Right cardiac atrium (tissue), 5 donors: ENCODE measurements at regions of chr12 and their contacts with region 1.

Region 1: GRCh38 chr12:9118158-9118557 is 2.4 kb upstream of the A2M start:
- DNase-seq: peak; percentile 12 to 49 (median 41)
- ATAC-seq: peak; percentile 53 to 54
- H3K4me3 ChIP-seq: no peak overlapping the region
- H3K27ac ChIP-seq: peak overlapping the region; percentile 49
- H3K4me1 ChIP-seq: peaks cover 5% of the 10 kb centered on the region
- H3K27me3 ChIP-seq: no peaks in the 10 kb centered on the region

Region 2: DNA sequence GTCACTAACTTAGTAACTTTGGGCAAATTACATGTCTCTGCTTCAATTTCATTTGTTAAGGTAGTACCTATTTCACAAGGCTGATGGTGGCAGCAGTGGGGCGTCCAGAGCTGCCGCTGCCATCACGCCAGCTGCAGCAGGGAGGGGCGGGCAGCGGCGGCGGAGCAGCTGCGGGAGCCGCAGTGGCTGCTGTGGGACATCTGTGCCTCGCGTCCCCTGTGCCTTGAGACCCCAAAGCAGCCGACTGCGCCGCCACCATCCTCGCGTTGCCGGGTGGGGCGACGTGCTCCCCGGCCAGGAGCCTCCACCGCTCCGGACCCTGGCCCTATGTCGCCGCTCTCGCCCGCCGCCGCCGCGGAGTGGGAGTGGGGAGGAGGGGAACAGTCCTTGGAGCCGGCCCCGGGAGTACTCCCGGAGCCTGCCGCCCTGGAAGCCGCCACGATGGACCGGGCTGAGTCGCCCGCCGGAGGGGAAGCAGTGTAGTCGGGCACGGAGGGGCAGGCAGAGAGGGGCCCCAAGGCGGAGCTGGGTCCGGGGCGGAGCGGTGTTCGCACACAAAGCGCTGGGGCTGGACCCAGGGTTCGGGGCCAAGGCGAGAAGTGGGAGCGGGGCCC is 53.9 kb before region 1 on chr12:
- intact Hi-C with region 1: loop called in 1 of 4 experiments (anchors 10 kb)
- DNase-seq: peak; percentile 61 to 87 (median 84)
- ATAC-seq: peak; percentile 90 to 93
- H3K4me3 ChIP-seq: peak overlapping the region; percentile 93
- H3K27ac ChIP-seq: peak overlapping the region; percentile 99
- H3K4me1 ChIP-seq: no peaks in the 10 kb centered on the region
- H3K27me3 ChIP-seq: no peaks in the 10 kb centered on the region

Region 3: GRCh38 chr12:9163392-9163791 is 45.2 kb after region 1 on chr12:
- intact Hi-C with region 1: loop called in 1 of 4 experiments (anchors 5 kb)
- DNase-seq: no peak
- ATAC-seq: peak; percentile 67 to 82
- H3K4me3 ChIP-seq: no peak overlapping the region
- H3K27ac ChIP-seq: no peak overlapping the region
- H3K4me1 ChIP-seq: no peaks in the 10 kb centered on the region
- H3K27me3 ChIP-seq: no peaks in the 10 kb centered on the region